K562 (cell line): ENCODE measurements at regions of chrX and their contacts with region 1.

Region 1: DNA sequence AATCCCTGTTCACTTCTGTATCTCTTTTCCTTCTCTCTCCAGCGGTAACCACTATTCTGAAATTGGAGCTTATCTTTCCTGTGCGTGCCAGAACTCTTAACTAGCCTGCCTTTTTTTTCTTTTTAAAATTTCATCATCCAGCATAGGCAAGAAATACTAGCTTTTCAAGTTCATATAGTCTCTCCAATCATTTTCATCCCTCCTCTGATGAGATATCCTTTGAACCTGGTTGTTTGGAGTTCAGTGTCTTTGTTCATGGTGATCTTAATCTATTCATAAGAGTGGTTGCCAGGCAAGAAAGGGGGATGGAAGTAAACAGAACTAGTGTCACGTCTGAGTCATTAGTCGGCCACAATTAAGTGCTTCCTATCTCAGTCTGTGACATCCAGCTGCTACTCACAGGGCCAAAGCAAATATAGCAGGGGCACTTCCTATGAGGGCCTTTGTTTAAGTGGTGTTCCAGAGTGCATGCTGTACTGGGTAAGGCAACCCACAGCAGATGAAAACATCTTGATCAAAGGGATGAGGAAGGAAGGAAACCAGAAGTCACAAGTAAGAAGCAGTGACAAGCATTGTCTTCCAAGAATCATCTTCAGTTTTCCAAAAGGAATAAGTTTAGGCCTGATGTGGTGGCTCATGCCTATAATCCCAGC is 56.4 kb upstream of the XIAP start:
- DNase-seq: peak; percentile 68 to 82 (median 74)
- ATAC-seq: peak; percentile 95
- H3K4me3 ChIP-seq: no peak overlapping the region
- H3K27ac ChIP-seq: peak overlapping the region; percentile 70; the same call in 2 of the 3 replicates
- H3K4me1 ChIP-seq: peaks cover 0 to 21% of the 10 kb centered on the region in 2 experiments; a peak in 3 of 5 replicates
- H3K27me3 ChIP-seq: no peaks in the 10 kb centered on the region
- CTCF ChIP-seq: no peak
- EP300 ChIP-seq: peak; percentile 79
- POLR2A ChIP-seq: no peak
- RAD21 ChIP-seq: no peak

Region 2: GRCh38 chrX:123720483-123720882 is 83.0 kb before region 1 on chrX:
- CTCF ChIA-PET with region 1: no interaction called
- POLR2A ChIA-PET with region 1: no interaction called
- in situ Hi-C with region 1: no loop called
- intact Hi-C with region 1: no loop called
- DNase-seq: no peak
- ATAC-seq: peak; percentile 10; the same call in 2 of the 3 replicates
- H3K4me3 ChIP-seq: no peak overlapping the region
- H3K27ac ChIP-seq: peak overlapping the region; percentile 36; the same call in 1 of the 3 replicates
- H3K4me1 ChIP-seq: peaks cover 0 to 20% of the 10 kb centered on the region in 2 experiments; a peak in 4 of 5 replicates
- H3K27me3 ChIP-seq: no peaks in the 10 kb centered on the region
- CTCF ChIP-seq: no peak
- EP300 ChIP-seq: no peak
- POLR2A ChIP-seq: no peak
- RAD21 ChIP-seq: no peak

Region 3: DNA sequence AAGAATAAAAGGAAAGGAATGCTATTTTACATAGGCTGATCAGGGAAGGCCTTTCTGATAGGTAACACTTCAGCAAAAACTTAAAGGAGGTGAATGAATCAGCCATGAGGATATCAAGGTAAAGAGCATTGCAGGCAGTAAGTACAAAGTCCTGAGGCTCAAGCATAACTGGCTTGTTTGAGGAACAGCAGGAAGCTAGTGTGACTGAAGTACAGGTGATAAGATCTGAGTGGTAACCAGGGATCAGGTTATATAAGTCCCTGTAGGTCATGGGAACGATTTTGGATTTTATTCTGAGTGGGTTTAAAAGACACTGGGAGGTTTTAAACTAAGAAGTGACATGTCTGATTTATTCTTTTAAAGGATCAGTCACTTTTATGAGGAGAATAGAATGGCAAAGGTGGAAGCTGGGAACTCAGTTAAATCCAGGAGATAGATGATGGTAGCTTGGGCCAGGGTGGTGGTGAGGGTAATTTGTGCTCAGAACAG is 23.5 kb before region 1 on chrX:
- CTCF ChIA-PET with region 1: no interaction called
- POLR2A ChIA-PET with region 1: interaction called, 4 read pairs
- in situ Hi-C with region 1: no loop called
- intact Hi-C with region 1: loop called (anchors 2 kb)
- DNase-seq: peak in 2 of 4 experiments; percentile 27 to 34
- ATAC-seq: peak; percentile 47; the same call in 2 of the 3 replicates
- H3K4me3 ChIP-seq: no peak overlapping the region
- H3K27ac ChIP-seq: no peak overlapping the region
- H3K4me1 ChIP-seq: peaks cover 7 to 13% of the 10 kb centered on the region in 2 experiments; a peak in 4 of 5 replicates
- H3K27me3 ChIP-seq: no peaks in the 10 kb centered on the region
- CTCF ChIP-seq: no peak
- EP300 ChIP-seq: no peak
- POLR2A ChIP-seq: no peak
- RAD21 ChIP-seq: no peak

Region 4: GRCh38 chrX:123878252-123878721 is 74.8 kb after region 1 on chrX:
- CTCF ChIA-PET with region 1: no interaction called
- POLR2A ChIA-PET with region 1: no interaction called
- in situ Hi-C with region 1: no loop called
- intact Hi-C with region 1: no loop called
- DNase-seq: no peak
- ATAC-seq: no peak
- H3K4me3 ChIP-seq: no peak overlapping the region
- H3K27ac ChIP-seq: no peak overlapping the region
- H3K4me1 ChIP-seq: no peaks in the 10 kb centered on the region
- H3K27me3 ChIP-seq: no peaks in the 10 kb centered on the region
- CTCF ChIP-seq: no peak
- EP300 ChIP-seq: no peak
- POLR2A ChIP-seq: no peak
- RAD21 ChIP-seq: no peak